ENCODE measurements at regions of chr6 and their contacts with region 1.

Region 1: GRCh38 chr6:6331946-6332601 is 11.6 kb upstream of the F13A1 start:
- DNase-seq: peak; percentile 69
- ATAC-seq: peak; percentile 78
- H3K4me3 ChIP-seq: peak overlapping the region in 1 of 5 experiments; percentile 13
- H3K4me3 Mint-ChIP-seq: peak overlapping the region; percentile 86
- H3K27ac ChIP-seq: peak overlapping the region in 1 of 2 donors; percentile 22
- H3K27ac Mint-ChIP-seq: peak overlapping the region; percentile 98
- H3K4me1 ChIP-seq: peaks cover 37% of the 10 kb centered on the region in 2 donors
- H3K4me1 Mint-ChIP-seq: peaks cover 48% of the 10 kb centered on the region
- H3K27me3 ChIP-seq: no peaks in the 10 kb centered on the region
- H3K27me3 Mint-ChIP-seq: no peaks in the 10 kb centered on the region
- CTCF ChIP-seq: no peak

Region 2: DNA sequence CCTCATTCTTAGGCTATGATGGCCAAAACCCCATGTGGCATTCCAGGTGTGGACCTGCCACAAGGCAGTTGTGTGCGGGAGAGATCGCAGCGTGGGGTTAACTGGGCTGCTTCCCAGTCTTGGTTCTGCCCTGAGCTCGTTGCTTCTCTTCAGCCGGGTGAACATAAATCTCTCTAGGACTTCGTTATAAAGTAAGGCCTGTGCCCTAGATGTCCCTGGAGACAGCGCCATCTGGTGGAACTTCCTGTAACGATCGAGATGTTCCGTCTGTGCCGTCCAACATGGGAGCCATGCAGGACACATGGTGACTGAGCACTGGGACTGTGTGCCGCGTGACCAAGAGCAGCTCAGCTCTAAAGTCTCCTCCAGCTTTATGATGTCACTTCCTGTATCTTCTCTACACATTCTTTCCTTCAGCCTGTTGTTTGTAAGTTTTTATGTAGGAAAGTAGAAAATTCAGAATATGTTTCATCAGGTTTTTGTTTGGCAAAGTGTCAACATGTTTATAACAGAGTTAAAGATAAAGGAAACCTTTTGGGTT is 1301.4 kb before region 1 on chr6:
- CTCF ChIA-PET with region 1: no interaction called
- POLR2A ChIA-PET with region 1: no interaction called
- intact Hi-C with region 1: no loop called
- DNase-seq: peak; percentile 79
- ATAC-seq: peak; percentile 87
- H3K4me3 ChIP-seq: no peak overlapping the region
- H3K4me3 Mint-ChIP-seq: no peak overlapping the region
- H3K27ac ChIP-seq: no peak overlapping the region
- H3K27ac Mint-ChIP-seq: no peak overlapping the region
- H3K4me1 ChIP-seq: peaks cover 18 to 23% of the 10 kb centered on the region in 2 donors
- H3K4me1 Mint-ChIP-seq: peaks cover 26% of the 10 kb centered on the region
- H3K27me3 ChIP-seq: peaks cover 0 to 10% (median 4%) of the 10 kb centered on the region in 4 experiments
- H3K27me3 Mint-ChIP-seq: no peaks in the 10 kb centered on the region
- CTCF ChIP-seq: peak; percentile 74

Region 3: GRCh38 chr6:6315660-6316059 is 16.4 kb before region 1 on chr6:
- CTCF ChIA-PET with region 1: interaction called, 5 read pairs
- POLR2A ChIA-PET with region 1: no interaction called
- intact Hi-C with region 1: loop called (anchors 2 kb)
- DNase-seq: peak; percentile 62
- ATAC-seq: peak; percentile 48
- H3K4me3 ChIP-seq: no peak overlapping the region
- H3K4me3 Mint-ChIP-seq: no peak overlapping the region
- H3K27ac ChIP-seq: no peak overlapping the region
- H3K27ac Mint-ChIP-seq: no peak overlapping the region
- H3K4me1 ChIP-seq: peaks cover 15 to 18% of the 10 kb centered on the region in 2 donors
- H3K4me1 Mint-ChIP-seq: peaks cover 20% of the 10 kb centered on the region
- H3K27me3 ChIP-seq: peaks cover 0 to 29% (median 23%) of the 10 kb centered on the region in 4 experiments
- H3K27me3 Mint-ChIP-seq: peaks cover 60% of the 10 kb centered on the region
- CTCF ChIP-seq: peak; percentile 89

Region 4: DNA sequence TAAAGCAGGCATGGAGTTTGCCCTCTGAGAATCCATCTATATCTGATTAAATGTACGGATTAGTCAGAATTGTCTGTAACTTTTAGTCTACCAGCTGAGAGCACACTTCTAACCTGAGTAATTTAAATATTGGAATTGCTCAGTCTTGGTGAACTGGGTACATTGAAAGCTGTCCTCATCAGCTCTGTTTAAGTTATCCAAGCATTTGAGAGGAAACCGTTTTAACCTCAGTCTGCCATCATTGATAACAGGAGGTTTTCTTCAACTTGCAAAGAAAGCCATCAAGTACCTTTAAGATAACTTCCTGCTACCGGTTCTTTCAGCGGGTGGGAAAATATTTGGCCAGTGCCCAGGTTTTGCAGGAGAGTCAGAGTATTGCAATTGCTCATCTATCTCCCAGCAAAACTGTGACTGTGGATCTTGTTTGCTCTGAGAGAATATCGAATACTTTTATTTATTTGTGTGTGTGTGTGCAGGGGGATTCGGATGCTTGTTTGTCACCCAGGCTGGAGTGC is 19.5 kb after region 1 on chr6:
- CTCF ChIA-PET with region 1: no interaction called
- POLR2A ChIA-PET with region 1: no interaction called
- intact Hi-C with region 1: loop called (anchors 2 kb)
- DNase-seq: no peak
- ATAC-seq: no peak
- H3K4me3 ChIP-seq: no peak overlapping the region
- H3K4me3 Mint-ChIP-seq: no peak overlapping the region
- H3K27ac ChIP-seq: no peak overlapping the region
- H3K27ac Mint-ChIP-seq: no peak overlapping the region
- H3K4me1 ChIP-seq: no peaks in the 10 kb centered on the region
- H3K4me1 Mint-ChIP-seq: peaks cover 2% of the 10 kb centered on the region
- H3K27me3 ChIP-seq: peaks cover 0 to 23% (median 16%) of the 10 kb centered on the region in 4 experiments
- H3K27me3 Mint-ChIP-seq: peaks cover 31% of the 10 kb centered on the region
- CTCF ChIP-seq: no peak

Region 5: DNA sequence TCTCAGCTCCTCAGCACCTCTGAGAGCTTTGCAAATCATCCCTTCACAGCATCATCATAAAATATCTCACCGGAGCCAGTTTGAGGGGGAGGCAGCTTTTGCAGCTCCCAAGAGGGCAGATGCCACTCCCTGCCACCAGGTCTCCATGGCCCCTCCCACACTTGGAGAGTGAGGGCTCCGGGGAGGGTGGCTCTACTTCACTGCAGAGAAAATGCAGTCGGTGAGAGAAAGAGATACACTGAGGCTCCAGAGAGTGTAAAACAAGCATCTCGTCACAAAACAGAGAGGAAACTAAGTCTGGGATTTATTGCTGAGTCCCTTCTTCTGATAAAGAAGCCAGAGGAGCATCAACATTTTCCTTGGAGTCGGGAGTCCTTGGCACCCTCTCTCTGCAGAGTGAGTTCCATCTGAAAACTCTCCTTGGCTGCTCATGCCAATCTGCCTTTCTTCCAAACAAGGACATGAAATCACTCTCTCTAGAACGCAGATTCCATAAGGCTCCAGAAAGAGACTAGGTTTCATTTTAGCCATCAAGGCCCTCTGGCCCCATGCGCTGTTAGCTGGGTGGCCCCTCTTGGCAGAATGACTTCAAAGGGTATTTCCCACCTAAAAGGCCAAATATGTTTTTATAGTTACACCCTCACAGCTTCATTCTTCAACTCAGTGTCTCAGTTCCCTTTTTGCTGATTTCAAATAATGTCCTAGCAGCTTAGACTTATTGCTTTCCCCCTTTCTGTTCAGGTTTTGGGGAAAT is 59.0 kb after region 1 on chr6:
- CTCF ChIA-PET with region 1: interaction called, 5 read pairs
- POLR2A ChIA-PET with region 1: interaction called, 27 read pairs
- intact Hi-C with region 1: loop called (anchors 1 kb)
- DNase-seq: peak; percentile 81
- ATAC-seq: peak; percentile 75
- H3K4me3 ChIP-seq: peak overlapping the region in 3 of 5 experiments; percentile 3 to 36 (median 26)
- H3K4me3 Mint-ChIP-seq: peak overlapping the region; percentile 87
- H3K27ac ChIP-seq: peak overlapping the region; percentile 83 to 92
- H3K27ac Mint-ChIP-seq: peak overlapping the region; percentile 97
- H3K4me1 ChIP-seq: peaks cover 37 to 44% of the 10 kb centered on the region in 2 donors
- H3K4me1 Mint-ChIP-seq: peaks cover 58% of the 10 kb centered on the region
- H3K27me3 ChIP-seq: no peaks in the 10 kb centered on the region
- H3K27me3 Mint-ChIP-seq: peaks cover 3% of the 10 kb centered on the region
- CTCF ChIP-seq: no peak

Region 6: DNA sequence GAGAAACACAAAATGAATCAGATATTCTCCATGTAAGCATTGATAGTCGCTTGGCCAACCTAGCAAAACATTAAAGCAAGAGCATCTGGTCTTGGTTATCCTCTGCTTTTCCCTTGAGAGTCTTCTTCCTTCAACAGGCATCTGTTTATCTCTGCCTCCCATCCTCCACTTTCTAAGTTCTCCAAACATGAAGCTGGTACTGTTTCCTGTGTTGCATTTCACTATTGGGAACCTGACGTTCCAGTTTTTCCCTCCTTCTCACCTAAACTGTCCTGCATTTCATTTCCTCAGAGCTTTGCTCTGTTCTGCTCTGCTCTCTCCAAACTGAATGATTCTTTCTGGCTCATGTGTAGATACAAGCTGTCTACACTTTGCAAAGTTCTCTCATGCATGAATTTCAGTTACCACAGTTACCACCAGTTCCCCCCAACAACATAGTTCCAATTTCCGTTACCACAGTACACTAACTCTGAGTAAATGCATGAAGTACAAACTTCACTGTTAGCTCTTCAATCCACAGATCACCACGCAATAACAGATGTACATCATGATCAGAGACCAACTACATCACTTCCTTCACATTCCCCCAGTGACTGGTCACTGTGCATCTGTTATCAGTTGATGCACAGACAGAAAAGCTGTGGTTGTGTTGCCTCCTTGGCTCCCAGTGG is 75.1 kb after region 1 on chr6:
- CTCF ChIA-PET with region 1: interaction called, 3 read pairs
- POLR2A ChIA-PET with region 1: interaction called, 13 read pairs
- intact Hi-C with region 1: loop called (anchors 1 kb)
- DNase-seq: peak; percentile 90
- ATAC-seq: peak; percentile 85
- H3K4me3 ChIP-seq: peak overlapping the region in 3 of 5 experiments; percentile 1 to 45 (median 32)
- H3K4me3 Mint-ChIP-seq: no peak overlapping the region
- H3K27ac ChIP-seq: peak overlapping the region; percentile 65 to 69
- H3K27ac Mint-ChIP-seq: no peak overlapping the region
- H3K4me1 ChIP-seq: peaks cover 24 to 25% of the 10 kb centered on the region in 2 donors
- H3K4me1 Mint-ChIP-seq: peaks cover 4% of the 10 kb centered on the region
- H3K27me3 ChIP-seq: peaks cover 0 to 18% (median 14%) of the 10 kb centered on the region in 4 experiments
- H3K27me3 Mint-ChIP-seq: peaks cover 24% of the 10 kb centered on the region
- CTCF ChIP-seq: no peak